ENCODE measurements at regions of chr3 and their contacts with region 1.

Region 1: GRCh38 chr3:12954891-12955650 is 113.7 kb upstream of the RPL32 start:
- DNase-seq: peak; percentile 90 to 98
- H3K4me3 ChIP-seq: peak overlapping the region; percentile 1 to 11
- H3K27ac ChIP-seq: peak overlapping the region; percentile 89 to 92
- H3K4me1 ChIP-seq: peaks cover 49 to 87% of the 10 kb centered on the region in 2 donors
- H3K27me3 ChIP-seq: no peaks in the 10 kb centered on the region
- CTCF ChIP-seq: peak in 2 of 3 experiments; percentile 4 to 23

Region 2: DNA sequence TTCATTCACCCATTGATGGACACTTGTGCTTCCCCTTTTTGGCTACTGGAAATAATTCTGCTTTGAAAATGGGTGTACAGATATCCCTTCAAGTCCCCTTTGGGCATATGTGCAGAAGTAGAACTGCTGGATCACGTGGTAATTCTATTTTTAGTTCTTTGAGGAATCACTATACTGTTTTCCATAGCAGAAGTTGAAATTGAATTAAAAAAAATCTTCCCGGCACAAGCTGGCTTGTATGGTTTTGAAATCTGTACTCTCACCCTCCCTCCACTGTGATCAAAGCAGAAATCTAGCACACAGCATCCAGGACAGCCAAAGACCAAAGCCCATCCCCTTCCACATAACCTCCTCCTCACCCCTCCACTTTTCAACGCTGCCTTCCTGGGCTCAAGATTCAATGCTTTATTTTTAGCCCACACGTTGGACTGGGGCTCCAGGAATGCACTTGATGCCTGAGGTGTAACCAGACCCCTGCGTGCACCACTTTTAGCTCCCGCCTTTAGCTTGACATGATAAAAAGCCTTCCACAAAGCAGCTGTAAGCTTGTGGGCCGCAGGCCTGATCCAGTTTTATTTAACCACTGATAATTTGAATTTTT is 225.9 kb before region 1 on chr3:
- intact Hi-C with region 1: no loop called
- DNase-seq: no peak
- H3K4me3 ChIP-seq: no peak overlapping the region
- H3K27ac ChIP-seq: no peak overlapping the region
- H3K4me1 ChIP-seq: peaks cover 0 to 3% of the 10 kb centered on the region in 2 donors
- H3K27me3 ChIP-seq: no peaks in the 10 kb centered on the region
- CTCF ChIP-seq: no peak

Region 3: GRCh38 chr3:12967606-12968351 is 12.7 kb after region 1 on chr3:
- intact Hi-C with region 1: loop called (anchors 1 kb)
- DNase-seq: peak; percentile 63 to 93
- H3K4me3 ChIP-seq: peak overlapping the region; percentile 76 to 89
- H3K27ac ChIP-seq: peak overlapping the region; percentile 82 to 90
- H3K4me1 ChIP-seq: peaks cover 24 to 41% of the 10 kb centered on the region in 2 donors
- H3K27me3 ChIP-seq: no peaks in the 10 kb centered on the region
- CTCF ChIP-seq: no peak

Measured in ascending aorta (tissue), 2 donors.